ENCODE measurements at regions of chr11 and their contacts with region 1.

Region 1: DNA sequence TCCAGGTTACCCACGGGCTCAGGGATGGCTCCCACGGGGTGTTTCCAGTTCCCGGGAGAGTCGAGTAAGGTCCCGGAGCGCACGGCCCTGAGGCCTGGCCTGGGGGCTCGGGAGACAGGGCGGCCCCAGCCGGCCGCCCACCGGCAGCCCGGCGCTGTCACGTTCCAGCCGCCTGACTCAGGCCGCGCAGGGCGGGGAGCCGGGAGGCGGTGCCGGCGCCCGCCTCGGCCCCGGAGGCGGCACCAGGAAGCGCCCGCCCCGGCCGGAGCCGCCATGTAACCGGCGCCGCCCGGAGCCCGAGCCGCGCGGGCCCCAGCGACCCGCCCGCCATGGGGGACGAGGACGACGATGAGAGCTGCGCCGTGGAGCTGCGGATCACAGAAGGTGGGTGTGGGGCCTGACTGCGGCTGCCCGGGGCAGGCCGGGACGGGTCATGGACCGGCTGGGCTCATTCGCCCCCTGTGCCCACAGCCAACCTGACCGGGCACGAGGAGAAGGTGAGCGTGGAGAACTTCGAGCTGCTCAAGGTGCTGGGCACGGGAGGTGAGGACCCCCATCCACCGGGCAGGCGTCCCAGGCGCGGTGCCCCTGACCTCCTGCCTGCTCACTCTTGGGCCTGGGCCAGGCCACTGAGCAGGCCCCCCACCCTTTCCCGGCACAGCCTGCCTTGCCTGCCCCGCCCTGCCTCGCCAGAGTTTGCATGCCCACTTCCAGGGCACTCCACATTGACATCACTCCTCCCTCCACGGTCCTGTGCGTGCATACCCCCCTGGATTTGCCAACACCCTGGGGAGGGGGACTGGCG is at the start of gene RPS6KA4:
- DNase-seq: peak in 3 of 5 donors; percentile 36 to 53 (median 50)
- H3K4me3 ChIP-seq: peak within 1 kb of the TSS; percentile 47 to 53
- H3K4me3 Mint-ChIP-seq: peak within 1 kb of the TSS; percentile 89 to 96 (median 94)
- H3K27ac ChIP-seq: peak within 1 kb of the TSS; percentile 62
- H3K27ac Mint-ChIP-seq: peak within 1 kb of the TSS; percentile 65 to 95 (median 80)
- H3K4me1 ChIP-seq: peaks cover 30% of the 10 kb centered on the region
- H3K4me1 Mint-ChIP-seq: peaks cover 17 to 45% (median 23%) of the 10 kb centered on the region in 4 donors
- H3K27me3 ChIP-seq: no peaks in the 10 kb centered on the region
- H3K27me3 Mint-ChIP-seq: no peaks in the 10 kb centered on the region
- total RNA-seq, gene RPS6KA4: 33.9 to 38.7 TPM

Region 2: DNA sequence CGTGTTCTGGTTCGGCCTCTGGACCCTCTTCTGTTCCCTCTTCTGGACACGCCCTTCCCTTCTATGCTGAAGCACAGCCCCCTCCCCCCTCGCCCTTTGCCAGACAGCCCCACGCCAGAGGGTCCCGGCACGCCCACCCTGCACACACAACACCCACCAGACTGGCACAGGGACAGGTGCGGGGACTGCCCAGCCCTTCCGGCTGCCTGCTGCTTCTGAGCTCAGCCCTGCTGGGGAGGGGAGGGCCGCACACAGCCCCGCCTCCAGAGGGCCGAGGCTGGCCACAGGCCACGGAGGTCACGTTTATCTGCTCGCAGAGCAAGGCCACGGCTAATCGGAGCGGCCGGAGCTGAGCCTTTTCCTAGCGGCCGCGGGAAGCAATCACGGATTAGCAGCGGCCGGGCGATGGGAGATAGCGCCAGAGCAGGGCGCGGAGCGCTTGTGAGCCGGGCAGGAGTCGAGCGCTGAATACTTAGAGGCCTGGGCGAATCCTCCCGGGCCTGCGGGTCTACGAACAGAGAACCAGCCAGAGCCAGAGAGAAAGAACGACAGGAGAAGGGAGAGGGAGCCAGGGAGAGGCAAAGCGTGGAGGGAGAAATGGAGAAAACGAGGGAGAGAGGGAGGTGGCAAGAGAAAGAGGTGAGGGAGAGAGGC is 351.4 kb before region 1 on chr11:
- CTCF ChIA-PET with region 1: no interaction called
- POLR2A ChIA-PET with region 1: no interaction called
- intact Hi-C with region 1: no loop called
- DNase-seq: no peak
- H3K4me3 ChIP-seq: no peak overlapping the region
- H3K4me3 Mint-ChIP-seq: peak overlapping the region in 7 of 8 donors; percentile 19 to 85 (median 72)
- H3K27ac ChIP-seq: no peak overlapping the region
- H3K27ac Mint-ChIP-seq: peak overlapping the region in 1 of 7 donors; percentile 70
- H3K4me1 ChIP-seq: peaks cover 11% of the 10 kb centered on the region
- H3K4me1 Mint-ChIP-seq: peaks cover 8 to 18% (median 12%) of the 10 kb centered on the region in 4 donors
- H3K27me3 ChIP-seq: no peaks in the 10 kb centered on the region
- H3K27me3 Mint-ChIP-seq: peaks cover 20 to 24% of the 10 kb centered on the region in 2 donors

Region 3: DNA sequence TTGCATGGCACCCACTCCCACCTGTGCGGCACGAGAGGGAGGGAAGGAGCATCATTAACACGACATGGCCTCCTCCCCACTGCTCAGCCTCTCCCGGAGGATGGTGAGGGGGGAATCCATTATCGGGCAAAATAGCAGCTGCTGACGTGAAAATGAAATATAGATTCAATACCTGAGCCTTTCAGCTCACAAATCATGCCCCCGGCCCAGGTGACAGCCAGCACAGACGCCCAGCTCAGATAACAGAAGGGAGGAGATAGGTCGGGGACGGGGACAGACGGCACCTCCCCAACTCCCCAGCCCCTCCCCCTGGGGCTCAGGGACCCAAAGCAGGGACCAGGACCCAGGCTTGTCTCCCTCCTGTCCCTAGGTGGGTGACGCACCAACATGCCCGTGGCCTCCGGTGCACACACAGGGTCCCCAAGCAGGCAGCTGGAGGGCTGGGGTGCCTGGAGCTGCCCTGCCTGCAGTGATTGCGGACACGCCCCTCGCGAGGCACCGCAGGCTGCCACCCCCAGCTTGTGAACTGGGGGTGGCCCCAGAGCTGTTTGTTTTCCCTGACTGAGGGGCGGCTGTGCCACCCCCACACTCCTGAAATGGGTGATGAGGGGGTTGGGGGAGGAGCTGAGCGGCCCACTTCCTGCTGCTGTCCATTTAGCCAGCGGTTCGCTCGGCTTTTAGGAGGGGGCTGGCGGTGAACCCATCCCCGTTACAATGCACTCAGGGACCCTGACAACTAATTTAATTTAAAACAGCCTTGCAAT is 291.7 kb before region 1 on chr11:
- CTCF ChIA-PET with region 1: no interaction called
- POLR2A ChIA-PET with region 1: no interaction called
- intact Hi-C with region 1: no loop called
- DNase-seq: peak in 1 of 5 donors; percentile 1
- H3K4me3 ChIP-seq: no peak overlapping the region
- H3K4me3 Mint-ChIP-seq: no peak overlapping the region
- H3K27ac ChIP-seq: no peak overlapping the region
- H3K27ac Mint-ChIP-seq: no peak overlapping the region
- H3K4me1 ChIP-seq: no peaks in the 10 kb centered on the region
- H3K4me1 Mint-ChIP-seq: no peaks in the 10 kb centered on the region
- H3K27me3 ChIP-seq: no peaks in the 10 kb centered on the region
- H3K27me3 Mint-ChIP-seq: peaks cover 5 to 7% of the 10 kb centered on the region in 2 donors

Region 4: DNA sequence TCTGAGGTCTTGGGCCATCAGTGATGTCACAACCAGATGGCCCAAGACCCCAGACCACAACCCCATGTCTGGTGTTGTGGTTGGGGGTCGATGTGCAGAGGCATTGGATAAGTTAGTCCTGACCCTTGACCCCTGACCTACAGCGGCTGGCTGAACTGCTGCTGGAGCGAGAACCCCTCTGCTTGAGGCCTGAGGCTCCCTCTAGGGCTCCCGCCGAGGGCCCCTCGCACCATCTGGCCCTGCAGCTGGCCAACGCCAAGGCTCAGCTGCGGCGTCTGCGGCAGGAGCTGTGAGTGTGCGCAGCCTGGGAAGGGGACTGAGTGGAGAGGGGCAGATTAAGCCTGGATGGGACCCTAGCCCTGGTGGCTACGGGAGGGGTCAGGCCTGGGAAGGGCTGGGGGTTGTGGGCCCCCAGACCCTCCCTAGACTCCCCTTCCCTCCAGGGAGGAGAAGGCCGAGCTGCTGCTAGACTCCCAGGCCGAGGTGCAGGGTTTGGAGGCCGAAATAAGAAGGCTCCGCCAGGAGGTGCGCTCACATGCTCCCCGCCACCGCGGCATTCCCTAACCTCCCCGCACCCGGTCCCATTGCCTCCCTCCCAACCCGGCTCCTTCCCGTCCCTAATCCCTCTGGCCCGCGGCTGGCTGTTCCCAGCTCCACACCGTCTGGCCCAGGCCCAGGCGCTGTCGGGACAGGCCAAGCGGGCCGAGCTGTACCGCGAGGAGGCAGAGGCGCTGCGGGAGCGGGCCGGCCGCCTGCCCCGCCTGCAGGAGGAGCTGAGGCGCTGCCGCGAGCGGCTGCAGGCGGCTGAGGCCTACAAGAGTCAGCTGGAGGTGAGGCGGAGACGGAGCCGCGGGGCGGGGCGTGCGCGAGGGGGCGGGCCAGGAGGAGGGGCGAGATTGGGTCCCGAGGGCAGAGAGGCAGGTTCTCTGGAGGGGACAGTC is 17.0 kb before region 1 on chr11:
- CTCF ChIA-PET with region 1: interaction called, 4 read pairs
- POLR2A ChIA-PET with region 1: interaction called, 38 read pairs
- intact Hi-C with region 1: loop called (anchors 1 kb)
- DNase-seq: peak; percentile 87 to 91 (median 89)
- H3K4me3 ChIP-seq: no peak overlapping the region
- H3K4me3 Mint-ChIP-seq: peak overlapping the region in 7 of 8 donors; percentile 39 to 93 (median 63)
- H3K27ac ChIP-seq: peak overlapping the region; percentile 42
- H3K27ac Mint-ChIP-seq: peak overlapping the region in 6 of 7 donors; percentile 48 to 88 (median 76)
- H3K4me1 ChIP-seq: peaks cover 44% of the 10 kb centered on the region
- H3K4me1 Mint-ChIP-seq: peaks cover 21 to 51% (median 36%) of the 10 kb centered on the region in 4 donors
- H3K27me3 ChIP-seq: no peaks in the 10 kb centered on the region
- H3K27me3 Mint-ChIP-seq: no peaks in the 10 kb centered on the region

Region 5: GRCh38 chr11:64500176-64501013 is 141.3 kb after region 1 on chr11:
- CTCF ChIA-PET with region 1: no interaction called
- POLR2A ChIA-PET with region 1: no interaction called
- intact Hi-C with region 1: no loop called
- DNase-seq: no peak
- H3K4me3 ChIP-seq: no peak overlapping the region
- H3K4me3 Mint-ChIP-seq: no peak overlapping the region
- H3K27ac ChIP-seq: no peak overlapping the region
- H3K27ac Mint-ChIP-seq: no peak overlapping the region
- H3K4me1 ChIP-seq: no peaks in the 10 kb centered on the region
- H3K4me1 Mint-ChIP-seq: no peaks in the 10 kb centered on the region
- H3K27me3 ChIP-seq: no peaks in the 10 kb centered on the region
- H3K27me3 Mint-ChIP-seq: peaks cover 14 to 25% of the 10 kb centered on the region in 2 donors

Region 6: GRCh38 chr11:64608046-64608445 is 248.9 kb after region 1 on chr11:
- CTCF ChIA-PET with region 1: no interaction called
- POLR2A ChIA-PET with region 1: no interaction called
- intact Hi-C with region 1: no loop called
- DNase-seq: no peak
- H3K4me3 ChIP-seq: no peak overlapping the region
- H3K4me3 Mint-ChIP-seq: peak overlapping the region in 1 of 8 donors; percentile 7
- H3K27ac ChIP-seq: no peak overlapping the region
- H3K27ac Mint-ChIP-seq: no peak overlapping the region
- H3K4me1 ChIP-seq: peaks cover 7% of the 10 kb centered on the region
- H3K4me1 Mint-ChIP-seq: peaks cover 9 to 14% (median 11%) of the 10 kb centered on the region in 4 donors
- H3K27me3 ChIP-seq: no peaks in the 10 kb centered on the region
- H3K27me3 Mint-ChIP-seq: peaks cover 2 to 9% of the 10 kb centered on the region in 2 donors

Measured in CD4-positive, alpha-beta memory T cell (primary cell).